ENCODE measurements at regions of chr10 and their contacts with region 1.

Region 1: GRCh38 chr10:77710759-77711682 is 73.4 kb upstream of the KCNMA1 start:
- DNase-seq: peak; percentile 73
- H3K4me3 ChIP-seq: peak overlapping the region; percentile 14 to 41 (median 38)
- H3K27ac ChIP-seq: no peak overlapping the region
- H3K4me1 ChIP-seq: peaks cover 3% of the 10 kb centered on the region
- H3K27me3 ChIP-seq: no peaks in the 10 kb centered on the region
- CTCF ChIP-seq: peak; percentile 98 to 100
- POLR2A ChIP-seq: no peak

Region 2: DNA sequence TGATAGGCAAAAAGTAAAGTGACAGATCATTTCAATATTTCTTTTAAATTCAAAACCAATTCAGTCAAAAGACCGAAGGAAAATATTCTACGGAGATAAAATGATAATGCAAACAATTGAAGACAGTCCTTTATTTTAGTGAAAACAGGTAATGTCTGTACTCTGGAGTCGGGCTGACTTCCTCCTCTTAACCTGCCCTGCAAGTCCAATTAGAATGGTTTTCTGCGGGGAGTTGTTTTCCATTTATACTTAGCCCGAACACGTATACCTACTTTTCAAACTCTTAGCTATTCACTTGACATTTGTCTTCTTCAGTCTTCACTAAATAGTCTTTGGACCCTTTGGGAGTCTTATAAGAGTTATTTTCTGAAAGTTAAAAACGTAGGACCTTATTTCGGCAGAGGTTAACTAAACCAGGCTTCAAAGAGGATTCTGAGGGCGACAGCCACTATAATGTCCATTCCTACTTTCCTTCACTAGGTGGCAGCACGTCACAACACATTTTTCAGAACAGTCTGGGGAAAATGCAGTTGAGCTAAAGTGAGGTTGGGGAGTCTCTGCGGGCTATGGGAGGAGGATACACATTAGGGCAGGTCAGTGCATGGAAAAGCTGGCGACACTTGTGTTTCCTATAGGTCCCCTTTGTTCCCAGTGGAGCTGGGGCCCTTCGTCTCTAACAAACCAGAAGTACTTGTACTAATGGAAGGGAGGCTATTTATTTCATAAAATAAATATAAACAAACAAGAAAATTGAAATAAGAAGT is 545.4 kb before region 1 on chr10:
- CTCF ChIA-PET with region 1: interaction called, 130 read pairs
- POLR2A ChIA-PET with region 1: no interaction called
- dilution Hi-C with region 1: no loop called
- intact Hi-C with region 1: loop called (anchors 1 kb)
- DNase-seq: peak; percentile 77
- H3K4me3 ChIP-seq: no peak overlapping the region
- H3K27ac ChIP-seq: peak overlapping the region; percentile 80
- H3K4me1 ChIP-seq: peaks cover 41% of the 10 kb centered on the region
- H3K27me3 ChIP-seq: no peaks in the 10 kb centered on the region
- CTCF ChIP-seq: peak; percentile 59 to 66
- POLR2A ChIP-seq: no peak

Region 3: GRCh38 chr10:77251297-77252013 is 459.6 kb before region 1 on chr10:
- CTCF ChIA-PET with region 1: interaction called, 19 read pairs
- POLR2A ChIA-PET with region 1: interaction called, 3 read pairs
- dilution Hi-C with region 1: no loop called
- intact Hi-C with region 1: loop called (anchors 2 kb)
- DNase-seq: peak; percentile 55
- H3K4me3 ChIP-seq: no peak overlapping the region
- H3K27ac ChIP-seq: no peak overlapping the region
- H3K4me1 ChIP-seq: no peaks in the 10 kb centered on the region
- H3K27me3 ChIP-seq: peaks cover 0 to 2% of the 10 kb centered on the region in 2 experiments
- CTCF ChIP-seq: peak; percentile 67 to 72
- POLR2A ChIP-seq: no peak

Region 4: DNA sequence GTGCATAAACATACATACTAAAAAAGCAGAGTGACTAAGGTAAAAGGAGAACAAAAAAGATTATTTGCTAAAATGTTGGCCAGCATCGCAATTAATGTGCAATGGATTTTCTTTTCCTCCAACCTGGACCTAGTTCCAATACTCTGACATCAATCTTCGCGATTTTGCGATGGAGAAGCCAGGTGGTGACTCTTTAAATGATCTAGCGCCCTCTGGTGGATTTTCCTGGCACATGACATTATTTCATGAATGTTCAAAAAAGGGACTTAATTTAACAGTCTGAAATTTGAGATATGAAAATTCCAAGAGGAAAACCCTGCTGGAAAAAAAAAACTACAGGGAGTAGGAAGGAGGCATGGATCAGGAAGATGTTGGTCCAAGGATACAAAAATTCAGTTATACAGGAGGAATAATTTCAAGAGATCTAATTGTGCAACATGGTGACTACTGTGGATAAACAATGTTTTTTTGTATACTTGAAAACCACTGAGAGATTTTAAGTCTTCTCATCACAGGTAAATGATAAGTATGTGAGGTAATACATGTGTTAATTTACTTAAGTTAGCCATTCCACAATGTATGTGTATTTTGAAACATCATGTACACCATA is 69.1 kb before region 1 on chr10:
- CTCF ChIA-PET with region 1: interaction called, 25 read pairs
- POLR2A ChIA-PET with region 1: no interaction called
- dilution Hi-C with region 1: no loop called
- intact Hi-C with region 1: loop called (anchors 2 kb)
- DNase-seq: peak; percentile 78
- H3K4me3 ChIP-seq: no peak overlapping the region
- H3K27ac ChIP-seq: no peak overlapping the region
- H3K4me1 ChIP-seq: no peaks in the 10 kb centered on the region
- H3K27me3 ChIP-seq: peaks cover 22 to 27% of the 10 kb centered on the region in 2 experiments
- CTCF ChIP-seq: peak; percentile 45 to 61
- POLR2A ChIP-seq: no peak

Region 5: DNA sequence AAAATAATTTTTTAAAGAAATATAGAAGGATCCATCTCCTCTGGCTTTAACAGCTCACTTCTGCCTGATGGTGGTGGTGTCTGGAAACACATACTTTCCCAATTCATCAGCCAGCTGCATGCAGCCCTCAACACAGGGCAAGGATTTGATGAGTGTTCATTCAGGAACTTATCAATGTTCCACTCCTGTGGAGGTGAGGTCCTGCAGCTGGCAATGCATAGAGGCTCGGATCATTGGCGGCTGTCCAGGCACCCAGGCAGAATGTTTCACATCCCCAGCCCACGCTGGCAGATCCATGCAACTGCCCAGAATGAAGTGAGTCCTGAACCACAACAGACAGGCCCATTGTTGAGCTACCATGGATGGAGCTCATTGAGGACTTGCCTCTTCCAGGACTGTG is 18.2 kb before region 1 on chr10:
- CTCF ChIA-PET with region 1: interaction called, 31 read pairs
- POLR2A ChIA-PET with region 1: no interaction called
- dilution Hi-C with region 1: no loop called
- intact Hi-C with region 1: no loop called
- DNase-seq: no peak
- H3K4me3 ChIP-seq: no peak overlapping the region
- H3K27ac ChIP-seq: no peak overlapping the region
- H3K4me1 ChIP-seq: no peaks in the 10 kb centered on the region
- H3K27me3 ChIP-seq: peaks cover 4 to 7% of the 10 kb centered on the region in 2 experiments
- CTCF ChIP-seq: no peak
- POLR2A ChIP-seq: no peak

Region 6: DNA sequence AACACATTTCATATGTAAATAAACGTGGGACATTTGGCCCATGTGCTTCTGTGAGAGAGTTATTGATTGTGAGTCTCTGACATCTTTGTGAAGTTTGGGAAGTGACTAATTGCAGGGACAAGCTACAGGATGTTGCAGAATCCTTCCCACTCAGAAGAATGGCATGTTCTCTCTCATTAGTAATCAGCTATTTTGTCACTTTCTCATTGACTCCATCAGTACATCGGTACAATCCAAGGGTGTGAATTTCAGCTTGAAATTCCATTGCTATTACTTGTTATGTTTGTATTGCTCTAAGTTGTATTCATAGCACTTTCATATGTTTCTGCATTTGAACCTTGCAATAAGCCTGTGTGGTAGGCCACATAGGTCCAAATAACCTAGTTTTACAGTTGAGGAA is 26.6 kb after region 1 on chr10:
- CTCF ChIA-PET with region 1: interaction called, 13 read pairs
- POLR2A ChIA-PET with region 1: no interaction called
- dilution Hi-C with region 1: no loop called
- intact Hi-C with region 1: no loop called
- DNase-seq: peak; percentile 94
- H3K4me3 ChIP-seq: no peak overlapping the region
- H3K27ac ChIP-seq: peak overlapping the region; percentile 90
- H3K4me1 ChIP-seq: peaks cover 20% of the 10 kb centered on the region
- H3K27me3 ChIP-seq: no peaks in the 10 kb centered on the region
- CTCF ChIP-seq: no peak
- POLR2A ChIP-seq: peak; percentile 37

Region 7: GRCh38 chr10:78029269-78030226 is 318.5 kb after region 1 on chr10 and contains the start of gene POLR3A:
- CTCF ChIA-PET with region 1: no interaction called
- POLR2A ChIA-PET with region 1: no interaction called
- dilution Hi-C with region 1: no loop called
- intact Hi-C with region 1: loop called (anchors 5 kb)
- DNase-seq: peak; percentile 95
- H3K4me3 ChIP-seq: peak within 1 kb of the TSS; percentile 53 to 92 (median 82)
- H3K27ac ChIP-seq: peak within 1 kb of the TSS; percentile 63
- H3K4me1 ChIP-seq: peaks cover 34% of the 10 kb centered on the region
- H3K27me3 ChIP-seq: no peaks in the 10 kb centered on the region
- CTCF ChIP-seq: peak; percentile 58 to 66
- POLR2A ChIP-seq: peak; percentile 68
- total RNA-seq, gene POLR3A: 22.1 and 25.3 TPM in 2 replicates